ENCODE measurements at regions of chr6 and their contacts with region 1.

Region 1: DNA sequence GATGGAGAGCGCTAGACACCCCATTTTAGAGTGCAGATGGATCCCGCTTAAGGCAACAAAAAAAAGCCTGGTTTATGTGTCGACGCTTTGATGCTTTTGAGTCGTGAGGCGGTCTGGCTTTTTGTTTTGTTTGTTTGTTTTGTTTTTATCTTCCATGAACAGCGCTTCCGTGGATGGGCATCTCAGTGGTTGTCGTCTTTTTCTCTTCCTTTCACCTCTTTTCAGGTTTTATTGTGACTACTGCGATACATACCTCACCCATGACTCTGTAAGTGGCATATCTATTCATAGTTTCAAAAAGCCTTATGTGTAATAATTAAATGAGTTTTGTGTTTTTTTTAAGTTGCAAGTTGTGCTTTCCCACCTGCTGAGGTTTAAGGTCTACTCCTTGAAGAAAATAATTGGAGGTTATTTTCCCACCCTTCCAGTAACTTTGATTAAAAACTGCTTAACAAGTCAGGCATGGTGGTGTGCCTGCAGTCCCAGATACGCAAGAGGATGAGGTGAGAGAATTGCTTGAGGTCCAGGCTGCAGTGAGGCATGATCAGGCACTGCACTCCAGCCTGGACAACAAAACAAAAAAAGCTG is 476 bp downstream of the SNRPC start:
- DNase-seq: no peak
- ATAC-seq: no peak
- H3K4me3 Mint-ChIP-seq: no peak overlapping the region
- H3K27ac Mint-ChIP-seq: no peak overlapping the region
- H3K4me1 Mint-ChIP-seq: peaks cover 12% of the 10 kb centered on the region
- H3K27me3 Mint-ChIP-seq: no peaks in the 10 kb centered on the region

Region 2: GRCh38 chr6:34248727-34249551 is 508.8 kb before region 1 on chr6 and contains the start of gene SMIM29:
- CTCF ChIA-PET with region 1: no interaction called
- POLR2A ChIA-PET with region 1: no interaction called
- intact Hi-C with region 1: loop called in 1 of 2 experiments (anchors 1 kb)
- DNase-seq: peak; percentile 99
- ATAC-seq: peak; percentile 83
- H3K4me3 Mint-ChIP-seq: peak within 1 kb of the TSS; percentile 76
- H3K27ac Mint-ChIP-seq: peak within 1 kb of the TSS; percentile 85
- H3K4me1 Mint-ChIP-seq: peaks cover 43% of the 10 kb centered on the region
- H3K27me3 Mint-ChIP-seq: no peaks in the 10 kb centered on the region
- total RNA-seq, gene SMIM29: 15.8 to 16.3 TPM

Region 3: GRCh38 chr6:34425498-34426410 is 332.0 kb before region 1 on chr6 and contains the start of gene RPS10:
- CTCF ChIA-PET with region 1: no interaction called
- POLR2A ChIA-PET with region 1: interaction called, 4 read pairs
- intact Hi-C with region 1: loop called in 1 of 2 experiments (anchors 1 kb)
- DNase-seq: peak; percentile 95
- ATAC-seq: peak; percentile 95
- H3K4me3 Mint-ChIP-seq: peak within 1 kb of the TSS; percentile 97
- H3K27ac Mint-ChIP-seq: peak within 1 kb of the TSS; percentile 99
- H3K4me1 Mint-ChIP-seq: peaks cover 35% of the 10 kb centered on the region
- H3K27me3 Mint-ChIP-seq: no peaks in the 10 kb centered on the region
- total RNA-seq, gene RPS10: 2,447 to 2,541 TPM

Region 4: GRCh38 chr6:34526992-34527728 is 230.6 kb before region 1 on chr6:
- CTCF ChIA-PET with region 1: no interaction called
- POLR2A ChIA-PET with region 1: no interaction called
- intact Hi-C with region 1: loop called in 1 of 2 experiments (anchors 1 kb)
- DNase-seq: peak; percentile 98
- ATAC-seq: peak; percentile 100
- H3K4me3 Mint-ChIP-seq: no peak overlapping the region
- H3K27ac Mint-ChIP-seq: no peak overlapping the region
- H3K4me1 Mint-ChIP-seq: peaks cover 3% of the 10 kb centered on the region
- H3K27me3 Mint-ChIP-seq: no peaks in the 10 kb centered on the region

Region 5: GRCh38 chr6:34602318-34603111 is 155.3 kb before region 1 on chr6:
- CTCF ChIA-PET with region 1: no interaction called
- POLR2A ChIA-PET with region 1: no interaction called
- intact Hi-C with region 1: no loop called
- DNase-seq: no peak
- ATAC-seq: no peak
- H3K4me3 Mint-ChIP-seq: no peak overlapping the region
- H3K27ac Mint-ChIP-seq: no peak overlapping the region
- H3K4me1 Mint-ChIP-seq: peaks cover 17% of the 10 kb centered on the region
- H3K27me3 Mint-ChIP-seq: no peaks in the 10 kb centered on the region

Region 6: DNA sequence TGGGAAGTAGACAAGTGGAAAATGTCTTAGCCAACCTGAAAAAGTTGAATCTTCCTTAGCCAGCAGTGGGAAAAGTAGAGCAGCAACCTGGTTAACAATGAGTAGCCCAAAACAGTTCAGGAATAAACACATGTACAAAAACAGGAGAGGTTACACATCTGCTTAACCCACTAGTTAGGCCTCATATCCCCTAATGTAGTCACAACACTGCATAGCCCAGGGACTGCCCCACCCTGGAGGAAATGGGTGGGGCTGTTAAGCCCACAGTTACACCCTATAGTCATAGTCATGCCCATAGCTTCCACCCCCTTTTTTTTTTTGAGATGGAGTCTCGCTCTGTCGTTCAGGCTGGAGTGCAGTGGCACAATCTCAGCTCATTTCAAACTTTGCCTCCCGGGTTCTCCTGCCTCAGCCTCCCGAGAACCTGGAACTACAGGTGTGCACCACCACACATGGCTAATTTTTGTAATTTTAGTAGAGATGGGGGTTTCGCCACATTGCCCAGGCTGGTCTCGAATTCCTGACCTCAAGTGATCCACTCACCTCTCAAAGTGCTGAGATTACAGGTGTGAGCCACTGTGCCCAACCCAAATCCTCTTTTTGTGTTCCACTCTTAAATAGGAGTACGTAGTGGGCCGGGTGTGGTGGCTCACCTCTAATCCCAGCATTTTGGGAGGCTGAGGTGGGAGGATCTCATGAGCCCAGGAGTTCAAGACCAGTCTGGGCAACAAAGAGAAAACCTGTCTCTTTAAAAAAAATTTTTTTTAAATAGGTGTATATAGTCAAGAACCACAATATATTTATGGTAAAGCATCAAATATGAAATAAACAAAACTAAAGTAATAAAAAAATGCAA is 85.8 kb before region 1 on chr6:
- CTCF ChIA-PET with region 1: no interaction called
- POLR2A ChIA-PET with region 1: interaction called, 10 read pairs
- intact Hi-C with region 1: loop called (anchors 1 to 5 kb)
- DNase-seq: peak; percentile 85
- ATAC-seq: peak; percentile 99
- H3K4me3 Mint-ChIP-seq: peak overlapping the region; percentile 65
- H3K27ac Mint-ChIP-seq: peak overlapping the region; percentile 93
- H3K4me1 Mint-ChIP-seq: peaks cover 65% of the 10 kb centered on the region
- H3K27me3 Mint-ChIP-seq: no peaks in the 10 kb centered on the region

Region 7: GRCh38 chr6:34791701-34792235 is 34.0 kb after region 1 on chr6 and contains the start of gene BLTP3A:
- CTCF ChIA-PET with region 1: interaction called, 6 read pairs
- POLR2A ChIA-PET with region 1: interaction called, 6 read pairs
- intact Hi-C with region 1: loop called (anchors 1 to 2 kb)
- DNase-seq: peak; percentile 88
- ATAC-seq: peak; percentile 95
- H3K4me3 Mint-ChIP-seq: peak within 1 kb of the TSS; percentile 99
- H3K27ac Mint-ChIP-seq: peak within 1 kb of the TSS; percentile 95
- H3K4me1 Mint-ChIP-seq: peaks cover 21% of the 10 kb centered on the region
- H3K27me3 Mint-ChIP-seq: no peaks in the 10 kb centered on the region
- total RNA-seq, gene BLTP3A: 17.0 to 21.0 TPM

Region 8: DNA sequence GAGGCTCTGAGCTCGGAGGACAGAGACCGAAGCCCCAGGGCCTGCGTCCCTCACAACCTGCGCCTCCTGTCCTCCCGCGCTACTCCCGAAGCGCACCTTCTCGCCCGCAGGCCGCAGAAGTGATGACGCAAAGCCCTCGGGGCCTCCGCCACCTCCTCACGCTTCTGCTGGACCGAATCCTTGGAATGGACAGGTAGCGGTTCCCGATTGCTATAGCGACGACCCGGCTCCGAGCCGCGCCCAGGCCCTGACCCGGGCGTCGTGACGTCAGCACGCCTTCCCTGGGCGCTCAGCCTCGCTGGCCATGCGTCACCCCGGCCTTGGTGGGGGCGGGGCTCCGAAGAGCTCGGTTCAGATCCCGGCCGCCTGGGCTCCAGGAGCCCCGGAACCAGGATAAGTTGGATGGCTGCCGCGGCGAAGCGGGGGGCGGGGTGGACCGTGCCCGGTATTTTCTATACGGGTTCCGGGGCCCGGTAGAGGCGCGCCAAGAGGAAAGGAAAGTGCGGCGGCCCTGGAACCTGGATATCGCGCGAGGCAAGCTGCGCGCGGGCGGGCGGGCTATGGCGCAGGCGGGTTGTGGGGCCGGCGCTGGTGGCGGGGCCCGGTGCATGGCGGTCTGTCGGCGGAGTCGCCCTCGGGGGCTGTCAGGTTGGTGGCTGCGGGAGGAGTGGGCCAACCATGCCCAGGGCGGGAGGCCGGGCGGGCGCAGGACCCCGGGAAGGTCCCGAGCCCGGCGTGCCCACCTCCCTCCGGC is 501.6 kb after region 1 on chr6 and contains the start of gene ZNF76:
- CTCF ChIA-PET with region 1: no interaction called
- POLR2A ChIA-PET with region 1: no interaction called
- intact Hi-C with region 1: loop called in 1 of 2 experiments (anchors 1 kb)
- DNase-seq: peak; percentile 95
- ATAC-seq: peak; percentile 89
- H3K4me3 Mint-ChIP-seq: peak within 1 kb of the TSS; percentile 91
- H3K27ac Mint-ChIP-seq: peak within 1 kb of the TSS; percentile 90
- H3K4me1 Mint-ChIP-seq: peaks cover 45% of the 10 kb centered on the region
- H3K27me3 Mint-ChIP-seq: no peaks in the 10 kb centered on the region
- total RNA-seq, gene ZNF76: 35.2 to 40.1 TPM

Measured in activated CD4-positive, alpha-beta T cell treated with anti-CD3 and anti-CD28 coated beads for 36 hours (primary cell).